ENCODE measurements at regions of chr11 and their contacts with region 1.

Region 1: DNA sequence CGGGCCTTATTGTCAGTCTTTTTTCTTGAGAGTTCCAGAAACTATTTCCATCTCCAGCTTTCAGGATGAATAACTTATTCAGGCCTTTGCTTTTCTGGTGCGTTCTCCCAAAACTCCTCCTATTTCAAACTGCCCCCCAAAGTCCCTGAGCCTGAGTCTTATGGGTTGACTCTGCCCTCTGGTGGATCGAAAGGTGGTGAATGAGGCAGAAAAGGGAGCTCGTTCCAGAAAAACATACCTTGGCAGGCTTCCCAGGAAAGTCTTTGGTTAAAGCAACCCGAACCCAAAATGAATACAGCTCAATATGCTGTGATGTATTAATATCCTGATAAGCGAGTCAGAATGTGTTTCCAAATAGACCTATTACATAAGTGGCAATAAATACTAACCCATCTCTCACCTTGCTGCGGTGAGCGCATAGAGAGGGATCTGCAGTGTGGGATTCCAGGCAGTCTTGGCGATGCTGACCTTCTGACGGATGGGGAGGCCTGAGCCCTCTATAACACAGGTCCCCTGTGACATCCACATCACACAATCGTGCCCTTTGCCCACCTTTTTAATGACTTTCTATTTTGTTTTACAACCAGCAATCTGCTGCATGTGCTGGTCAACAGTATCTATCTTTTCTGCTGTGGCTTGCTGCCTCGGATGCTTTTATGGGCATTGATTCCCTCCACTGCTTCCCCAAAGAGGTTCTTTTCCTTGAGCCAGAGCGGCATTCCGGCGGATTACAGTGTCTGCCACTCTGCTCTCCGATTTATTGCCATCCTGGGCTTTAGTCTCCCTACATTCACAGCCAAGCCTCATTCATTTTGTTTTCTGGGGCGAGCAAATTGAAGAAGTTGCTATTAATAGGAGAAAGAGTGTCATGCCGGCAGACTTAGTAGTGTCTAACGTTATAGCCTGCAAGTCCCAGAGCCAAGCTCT is 756.8 kb downstream of the NTM start:
- DNase-seq: peak in 2 of 3 donors; percentile 11
- H3K4me3 ChIP-seq: peak overlapping the region; percentile 25 to 63 (median 35)
- H3K4me3 Mint-ChIP-seq: no peak overlapping the region
- H3K27ac ChIP-seq: no peak overlapping the region
- H3K27ac Mint-ChIP-seq: no peak overlapping the region
- H3K4me1 ChIP-seq: peaks cover 9 to 12% of the 10 kb centered on the region in 2 donors
- H3K4me1 Mint-ChIP-seq: no peaks in the 10 kb centered on the region
- H3K27me3 ChIP-seq: no peaks in the 10 kb centered on the region
- H3K27me3 Mint-ChIP-seq: peaks cover 3 to 29% (median 5%) of the 10 kb centered on the region in 3 donors
- CTCF ChIP-seq: peak; percentile 48

Region 2: GRCh38 chr11:131748151-131749050 is 378.8 kb before region 1 on chr11:
- intact Hi-C with region 1: loop called in 1 of 2 experiments (anchors 2 kb)
- DNase-seq: peak; percentile 4 to 42 (median 40)
- H3K4me3 ChIP-seq: no peak overlapping the region
- H3K4me3 Mint-ChIP-seq: no peak overlapping the region
- H3K27ac ChIP-seq: no peak overlapping the region
- H3K27ac Mint-ChIP-seq: no peak overlapping the region
- H3K4me1 ChIP-seq: no peaks in the 10 kb centered on the region
- H3K4me1 Mint-ChIP-seq: no peaks in the 10 kb centered on the region
- H3K27me3 ChIP-seq: peaks cover 0 to 2% of the 10 kb centered on the region in 2 donors
- H3K27me3 Mint-ChIP-seq: peaks cover 3 to 13% (median 5%) of the 10 kb centered on the region in 3 donors
- CTCF ChIP-seq: peak; percentile 80

Region 3: DNA sequence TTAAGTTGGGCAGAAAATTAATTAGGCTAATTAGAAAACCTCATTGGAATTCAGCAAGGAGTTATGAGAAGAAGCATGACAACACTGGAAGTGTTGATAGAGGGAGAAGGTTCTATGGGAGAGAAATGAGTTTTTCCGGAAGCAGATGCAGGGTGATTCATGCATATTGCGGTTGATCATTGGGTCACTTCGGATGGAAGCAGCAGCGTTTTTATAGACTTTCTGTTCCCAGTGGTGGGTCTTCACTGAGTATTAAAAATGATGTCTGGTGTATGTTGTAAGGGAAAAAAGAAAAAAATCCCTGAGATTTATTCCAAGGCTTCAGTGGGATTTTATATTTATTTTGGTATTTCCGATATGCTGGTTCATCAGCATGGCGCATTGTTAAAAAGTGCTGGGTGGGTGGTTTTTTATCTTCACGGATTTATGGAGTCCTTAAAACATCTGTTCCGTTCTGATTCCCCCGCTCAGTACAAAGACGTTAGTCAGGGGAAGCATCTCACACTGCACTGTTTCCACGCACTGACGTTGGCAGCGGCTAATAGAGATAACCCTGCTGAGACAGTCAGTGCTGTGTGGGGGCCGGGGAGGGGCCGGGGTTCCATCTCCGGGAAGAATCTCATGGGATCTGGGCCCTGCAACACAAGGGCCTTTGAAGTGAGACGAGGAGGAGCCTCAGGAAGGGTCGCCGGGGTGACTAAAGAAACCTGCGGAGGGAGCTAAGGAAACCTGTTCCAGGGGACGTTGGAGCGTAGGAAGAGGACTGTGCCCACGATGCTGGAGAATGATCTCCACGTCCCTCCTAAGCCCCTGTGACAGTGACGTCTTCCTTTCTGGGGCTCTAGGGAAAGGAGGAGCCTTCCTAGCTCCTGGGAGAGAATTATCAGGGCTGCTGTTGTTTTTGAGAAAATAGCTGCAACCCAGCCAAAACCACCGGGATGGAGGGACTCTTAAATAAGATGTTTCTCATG is 366.9 kb before region 1 on chr11:
- intact Hi-C with region 1: loop called in 1 of 2 experiments (anchors 10 kb)
- DNase-seq: no peak
- H3K4me3 ChIP-seq: no peak overlapping the region
- H3K4me3 Mint-ChIP-seq: no peak overlapping the region
- H3K27ac ChIP-seq: no peak overlapping the region
- H3K27ac Mint-ChIP-seq: no peak overlapping the region
- H3K4me1 ChIP-seq: no peaks in the 10 kb centered on the region
- H3K4me1 Mint-ChIP-seq: no peaks in the 10 kb centered on the region
- H3K27me3 ChIP-seq: no peaks in the 10 kb centered on the region
- H3K27me3 Mint-ChIP-seq: peaks cover 2 to 6% (median 4%) of the 10 kb centered on the region in 3 donors
- CTCF ChIP-seq: no peak

Region 4: DNA sequence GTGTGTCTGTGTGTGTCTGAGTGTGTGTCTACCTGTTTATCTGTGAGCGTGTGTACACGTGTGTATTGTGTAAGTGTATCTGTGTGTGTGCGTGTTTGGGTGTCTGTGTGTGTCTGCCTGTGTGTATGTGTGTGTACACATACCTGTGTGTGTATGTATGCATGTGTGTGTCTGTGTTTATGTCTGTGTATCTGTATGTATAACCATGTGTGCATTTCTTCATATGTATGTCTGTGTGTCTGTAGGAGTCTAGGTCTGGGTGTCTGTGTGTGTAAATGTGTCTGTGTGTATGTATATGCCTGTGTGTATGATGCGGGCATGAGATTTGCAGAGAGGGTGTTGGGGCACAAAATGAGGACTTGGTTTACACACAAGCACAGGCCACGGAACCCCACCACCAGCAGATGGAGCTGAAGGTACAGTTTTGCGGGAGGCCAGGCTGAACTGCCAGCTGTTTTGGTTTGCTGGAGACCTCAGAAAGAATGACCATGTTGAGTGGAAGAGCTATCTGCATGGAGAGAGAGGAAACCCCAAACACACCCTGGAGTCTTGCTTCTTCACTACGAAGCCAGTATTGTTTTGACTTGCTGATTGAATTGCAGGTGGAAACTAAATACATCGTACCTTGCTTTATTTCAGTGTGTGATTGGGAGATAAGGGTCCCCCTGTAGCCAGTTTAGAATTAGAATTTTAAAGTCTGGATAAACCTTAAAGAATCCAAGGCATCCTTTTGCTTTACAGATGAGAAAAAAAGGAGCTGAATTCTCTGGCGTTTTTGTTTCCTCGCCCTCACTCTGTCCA is 259.6 kb before region 1 on chr11:
- intact Hi-C with region 1: loop called (anchors 2 to 10 kb)
- DNase-seq: peak; percentile 9 to 38 (median 23)
- H3K4me3 ChIP-seq: no peak overlapping the region
- H3K4me3 Mint-ChIP-seq: no peak overlapping the region
- H3K27ac ChIP-seq: no peak overlapping the region
- H3K27ac Mint-ChIP-seq: no peak overlapping the region
- H3K4me1 ChIP-seq: no peaks in the 10 kb centered on the region
- H3K4me1 Mint-ChIP-seq: peaks cover 3% of the 10 kb centered on the region
- H3K27me3 ChIP-seq: no peaks in the 10 kb centered on the region
- H3K27me3 Mint-ChIP-seq: peaks cover 2 to 4% (median 3%) of the 10 kb centered on the region in 3 donors
- CTCF ChIP-seq: peak; percentile 34

Region 5: DNA sequence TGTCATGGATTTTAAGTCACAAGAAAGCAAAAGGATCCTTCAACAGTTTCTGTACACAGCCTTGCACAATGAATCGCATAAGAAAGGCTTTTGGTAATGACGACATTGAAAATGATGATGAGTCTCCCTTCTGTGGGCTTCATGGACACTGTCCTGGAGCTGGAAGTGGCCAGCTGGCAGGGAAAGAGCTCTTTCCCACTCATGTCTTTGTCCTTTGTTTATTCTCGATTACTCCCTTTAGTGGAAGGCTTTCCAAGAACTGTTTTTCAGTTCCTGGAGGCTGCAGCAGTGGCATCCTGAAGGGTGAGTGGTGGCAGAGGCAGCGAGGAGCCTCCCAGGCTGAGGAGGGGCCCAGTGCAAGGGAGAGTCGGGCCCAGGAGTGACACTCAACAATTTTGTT is 251.6 kb before region 1 on chr11:
- intact Hi-C with region 1: loop called in 1 of 2 experiments (anchors 10 kb)
- DNase-seq: no peak
- H3K4me3 ChIP-seq: no peak overlapping the region
- H3K4me3 Mint-ChIP-seq: no peak overlapping the region
- H3K27ac ChIP-seq: no peak overlapping the region
- H3K27ac Mint-ChIP-seq: peak overlapping the region in 1 of 7 donors; percentile 43
- H3K4me1 ChIP-seq: no peaks in the 10 kb centered on the region
- H3K4me1 Mint-ChIP-seq: no peaks in the 10 kb centered on the region
- H3K27me3 ChIP-seq: no peaks in the 10 kb centered on the region
- H3K27me3 Mint-ChIP-seq: peaks cover 4 to 22% (median 6%) of the 10 kb centered on the region in 3 donors
- CTCF ChIP-seq: no peak

Region 6: GRCh38 chr11:132205496-132205895 is 78.3 kb after region 1 on chr11:
- intact Hi-C with region 1: no loop called
- DNase-seq: no peak
- H3K4me3 ChIP-seq: no peak overlapping the region
- H3K4me3 Mint-ChIP-seq: no peak overlapping the region
- H3K27ac ChIP-seq: no peak overlapping the region
- H3K27ac Mint-ChIP-seq: no peak overlapping the region
- H3K4me1 ChIP-seq: no peaks in the 10 kb centered on the region
- H3K4me1 Mint-ChIP-seq: no peaks in the 10 kb centered on the region
- H3K27me3 ChIP-seq: no peaks in the 10 kb centered on the region
- H3K27me3 Mint-ChIP-seq: peaks cover 0 to 2% (median 0%) of the 10 kb centered on the region in 3 donors
- CTCF ChIP-seq: no peak

Measured in CD14-positive monocyte (primary cell).